GM12878 (cell line): ENCODE measurements at regions of chr16 and their contacts with region 1.

Region 1: DNA sequence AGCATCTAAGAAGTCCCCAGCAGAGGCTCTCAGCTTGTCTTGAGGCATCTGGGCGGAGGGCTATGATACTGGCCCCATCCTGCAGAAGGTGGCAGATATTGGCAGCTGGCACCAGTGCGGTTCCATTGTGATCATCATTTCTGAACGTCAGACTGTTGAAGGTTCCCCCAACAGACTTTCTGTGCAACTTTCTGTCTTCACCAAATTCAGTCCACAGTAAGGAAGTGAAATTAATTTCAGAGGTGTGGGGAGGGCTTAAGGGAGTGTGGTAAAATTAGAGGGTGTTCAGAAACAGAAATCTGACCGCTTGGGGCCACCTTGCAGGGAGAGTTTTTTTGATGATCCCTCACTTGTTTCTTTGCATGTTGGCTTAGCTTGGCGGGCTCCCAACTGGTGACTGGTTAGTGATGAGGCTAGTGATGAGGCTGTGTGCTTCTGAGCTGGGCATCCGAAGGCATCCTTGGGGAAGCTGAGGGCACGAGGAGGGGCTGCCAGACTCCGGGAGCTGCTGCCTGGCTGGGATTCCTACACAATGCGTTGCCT is at the start of gene CIITA:
- DNase-seq: peak; percentile 97
- ATAC-seq: peak; percentile 56
- H3K4me3 ChIP-seq: peak within 1 kb of the TSS; percentile 78
- H3K27ac ChIP-seq: peak within 1 kb of the TSS; percentile 94
- H3K4me1 ChIP-seq: peaks cover 40% of the 10 kb centered on the region
- H3K27me3 ChIP-seq: no peaks in the 10 kb centered on the region
- CTCF ChIP-seq: no peak
- EP300 ChIP-seq: peak; percentile 28 to 85; a peak in 3 of 4 replicates
- POLR2A ChIP-seq: peak; percentile 86
- RAD21 ChIP-seq: peak; percentile 32; the same call in 1 of the 2 replicates
- polyA plus RNA-seq, gene CIITA: 11.5 to 12.5 TPM

Region 2: GRCh38 chr16:10743610-10744393 is 133.1 kb before region 1 on chr16 and contains the start of gene NUBP1:
- CTCF ChIA-PET with region 1: interaction called, 8 read pairs
- POLR2A ChIA-PET with region 1: interaction called, 25 read pairs
- RAD21 ChIA-PET with region 1: interaction called, 65 read pairs
- SMC1A ChIA-PET with region 1: interaction called, 66 read pairs
- in situ Hi-C with region 1: loop called (anchors 5 kb)
- intact Hi-C with region 1: loop called (anchors 2 kb)
- DNase-seq: peak; percentile 94
- ATAC-seq: peak; percentile 93
- H3K4me3 ChIP-seq: peak within 1 kb of the TSS; percentile 69
- H3K27ac ChIP-seq: peak within 1 kb of the TSS; percentile 74
- H3K4me1 ChIP-seq: peaks cover 39% of the 10 kb centered on the region
- H3K27me3 ChIP-seq: no peaks in the 10 kb centered on the region
- CTCF ChIP-seq: peak in 1 of 3 experiments; percentile 8; a peak in 1 of 6 replicates
- EP300 ChIP-seq: 0 out of 4 replicates have a peak, but pooled peaks of 1 of the 2 experiments have one; percentile 4
- POLR2A ChIP-seq: peak; percentile 96
- RAD21 ChIP-seq: no peak
- polyA plus RNA-seq, gene NUBP1: 31.0 to 36.3 TPM

Region 3: DNA sequence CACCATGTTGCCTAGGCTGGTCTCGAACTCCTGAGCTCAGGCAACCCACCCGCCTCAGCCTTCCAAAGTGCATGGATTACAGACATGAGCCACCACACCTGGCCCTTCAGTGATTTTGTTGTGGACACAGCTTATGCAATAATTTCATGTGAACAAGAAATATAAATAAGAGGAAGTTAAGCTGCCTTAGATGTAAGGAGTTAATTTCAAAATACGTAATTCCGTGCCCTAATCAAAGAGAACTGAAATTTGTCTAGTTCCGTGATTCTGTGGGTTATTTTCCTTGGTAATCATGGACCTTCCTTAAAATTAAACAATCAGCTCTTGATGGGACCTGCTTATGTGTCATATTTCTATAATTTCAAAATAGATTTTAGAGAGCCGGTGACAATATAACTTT is 70.2 kb before region 1 on chr16:
- CTCF ChIA-PET with region 1: interaction called, 7 read pairs
- POLR2A ChIA-PET with region 1: interaction called, 8 read pairs
- RAD21 ChIA-PET with region 1: interaction called, 6 read pairs
- SMC1A ChIA-PET with region 1: interaction called, 23 read pairs
- in situ Hi-C with region 1: no loop called
- intact Hi-C with region 1: no loop called
- DNase-seq: no peak
- ATAC-seq: peak; percentile 37
- H3K4me3 ChIP-seq: no peak overlapping the region
- H3K27ac ChIP-seq: 0 out of 2 replicates have a peak overlapping the region, but pooled peaks have one; percentile 2
- H3K4me1 ChIP-seq: peaks cover 59% of the 10 kb centered on the region
- H3K27me3 ChIP-seq: no peaks in the 10 kb centered on the region
- CTCF ChIP-seq: no peak
- EP300 ChIP-seq: no peak
- POLR2A ChIP-seq: no peak
- RAD21 ChIP-seq: no peak

Region 4: DNA sequence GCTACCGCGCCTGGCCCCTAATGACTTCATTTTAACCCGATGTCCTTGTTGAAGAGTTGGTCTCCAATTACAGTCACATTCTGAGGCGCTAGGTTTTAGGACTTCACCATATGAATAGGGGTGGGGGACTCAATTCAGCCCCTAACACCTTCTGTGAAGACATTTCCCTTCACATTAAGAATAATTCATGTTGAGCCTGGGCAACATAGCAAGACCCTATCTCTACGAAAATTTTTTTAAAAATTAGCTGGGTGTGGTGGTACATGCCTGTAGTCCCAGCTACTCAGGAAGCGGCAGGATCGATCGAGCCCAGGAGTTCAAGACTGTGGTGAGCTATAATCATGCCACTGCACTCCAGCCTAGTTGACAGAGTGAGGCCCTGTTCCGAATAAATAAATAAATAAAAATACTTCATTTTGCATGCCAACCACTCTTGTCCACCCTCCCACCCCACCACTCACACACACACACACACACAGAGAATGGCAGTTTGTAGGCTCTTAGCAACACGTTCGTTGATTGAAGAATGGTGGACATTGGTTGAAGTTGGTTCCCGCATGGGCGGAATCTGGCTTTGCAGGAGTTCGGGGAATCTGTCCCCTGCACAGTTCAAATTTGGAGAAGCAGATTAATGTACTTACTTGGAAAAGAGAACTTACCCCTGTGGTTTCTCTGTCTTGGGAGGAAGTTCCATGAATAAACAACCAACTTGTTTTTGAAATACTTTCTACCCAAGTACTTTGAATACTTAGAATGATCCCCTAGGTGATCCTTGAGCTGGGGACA is 30.5 kb before region 1 on chr16:
- CTCF ChIA-PET with region 1: interaction called, 3 read pairs
- POLR2A ChIA-PET with region 1: interaction called, 5 read pairs
- RAD21 ChIA-PET with region 1: interaction called, 19 read pairs
- SMC1A ChIA-PET with region 1: interaction called, 13 read pairs
- in situ Hi-C with region 1: no loop called
- intact Hi-C with region 1: no loop called
- DNase-seq: no peak
- ATAC-seq: no peak
- H3K4me3 ChIP-seq: no peak overlapping the region
- H3K27ac ChIP-seq: no peak overlapping the region
- H3K4me1 ChIP-seq: peaks cover 20% of the 10 kb centered on the region
- H3K27me3 ChIP-seq: no peaks in the 10 kb centered on the region
- CTCF ChIP-seq: no peak
- EP300 ChIP-seq: no peak
- POLR2A ChIP-seq: no peak
- RAD21 ChIP-seq: no peak

Region 5: DNA sequence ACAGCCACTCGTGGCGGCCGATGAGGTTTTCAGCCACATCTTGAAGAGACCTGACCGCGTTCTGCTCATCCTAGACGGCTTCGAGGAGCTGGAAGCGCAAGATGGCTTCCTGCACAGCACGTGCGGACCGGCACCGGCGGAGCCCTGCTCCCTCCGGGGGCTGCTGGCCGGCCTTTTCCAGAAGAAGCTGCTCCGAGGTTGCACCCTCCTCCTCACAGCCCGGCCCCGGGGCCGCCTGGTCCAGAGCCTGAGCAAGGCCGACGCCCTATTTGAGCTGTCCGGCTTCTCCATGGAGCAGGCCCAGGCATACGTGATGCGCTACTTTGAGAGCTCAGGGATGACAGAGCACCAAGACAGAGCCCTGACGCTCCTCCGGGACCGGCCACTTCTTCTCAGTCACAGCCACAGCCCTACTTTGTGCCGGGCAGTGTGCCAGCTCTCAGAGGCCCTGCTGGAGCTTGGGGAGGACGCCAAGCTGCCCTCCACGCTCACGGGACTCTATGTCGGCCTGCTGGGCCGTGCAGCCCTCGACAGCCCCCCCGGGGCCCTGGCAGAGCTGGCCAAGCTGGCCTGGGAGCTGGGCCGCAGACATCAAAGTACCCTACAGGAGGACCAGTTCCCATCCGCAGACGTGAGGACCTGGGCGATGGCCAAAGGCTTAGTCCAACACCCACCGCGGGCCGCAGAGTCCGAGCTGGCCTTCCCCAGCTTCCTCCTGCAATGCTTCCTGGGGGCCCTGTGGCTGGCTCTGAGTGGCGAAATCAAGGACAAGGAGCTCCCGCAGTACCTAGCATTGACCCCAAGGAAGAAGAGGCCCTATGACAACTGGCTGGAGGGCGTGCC is 30.3 kb after region 1 on chr16:
- CTCF ChIA-PET with region 1: interaction called, 17 read pairs
- POLR2A ChIA-PET with region 1: interaction called, 7 read pairs
- RAD21 ChIA-PET with region 1: interaction called, 30 read pairs
- SMC1A ChIA-PET with region 1: interaction called, 55 read pairs
- in situ Hi-C with region 1: no loop called
- intact Hi-C with region 1: no loop called
- DNase-seq: no peak
- ATAC-seq: no peak
- H3K4me3 ChIP-seq: no peak overlapping the region
- H3K27ac ChIP-seq: no peak overlapping the region
- H3K4me1 ChIP-seq: peaks cover 7% of the 10 kb centered on the region
- H3K27me3 ChIP-seq: no peaks in the 10 kb centered on the region
- CTCF ChIP-seq: no peak
- EP300 ChIP-seq: no peak
- POLR2A ChIP-seq: no peak
- RAD21 ChIP-seq: no peak

Region 6: GRCh38 chr16:10942233-10943063 is 65.6 kb after region 1 on chr16 and contains the start of gene DEXI:
- CTCF ChIA-PET with region 1: interaction called, 14 read pairs
- POLR2A ChIA-PET with region 1: interaction called, 15 read pairs
- RAD21 ChIA-PET with region 1: interaction called, 14 read pairs
- SMC1A ChIA-PET with region 1: interaction called, 11 read pairs
- in situ Hi-C with region 1: no loop called
- intact Hi-C with region 1: no loop called
- DNase-seq: peak; percentile 69
- ATAC-seq: peak; percentile 80
- H3K4me3 ChIP-seq: peak within 1 kb of the TSS; percentile 82
- H3K27ac ChIP-seq: peak within 1 kb of the TSS; percentile 72
- H3K4me1 ChIP-seq: peaks cover 32% of the 10 kb centered on the region
- H3K27me3 ChIP-seq: no peaks in the 10 kb centered on the region
- CTCF ChIP-seq: peak in 1 of 3 experiments; percentile 9; a peak in 1 of 6 replicates
- EP300 ChIP-seq: no peak
- POLR2A ChIP-seq: peak; percentile 79
- RAD21 ChIP-seq: no peak
- polyA plus RNA-seq, gene DEXI: 1.4 to 4.3 TPM